ENCODE measurements at regions of chr1 and their contacts with region 1.

Region 1: GRCh38 chr1:84603941-84604830 is 29.9 kb upstream of the CTBS start:
- DNase-seq: peak in 1 of 2 donors; percentile 53
- ATAC-seq: peak; percentile 86 to 98 (median 91)
- H3K4me3 ChIP-seq: peak overlapping the region; percentile 47
- H3K27ac ChIP-seq: peak overlapping the region; percentile 49
- H3K4me1 ChIP-seq: peaks cover 10% of the 10 kb centered on the region
- H3K27me3 ChIP-seq: no peaks in the 10 kb centered on the region
- CTCF ChIP-seq: peak; percentile 63

Region 2: DNA sequence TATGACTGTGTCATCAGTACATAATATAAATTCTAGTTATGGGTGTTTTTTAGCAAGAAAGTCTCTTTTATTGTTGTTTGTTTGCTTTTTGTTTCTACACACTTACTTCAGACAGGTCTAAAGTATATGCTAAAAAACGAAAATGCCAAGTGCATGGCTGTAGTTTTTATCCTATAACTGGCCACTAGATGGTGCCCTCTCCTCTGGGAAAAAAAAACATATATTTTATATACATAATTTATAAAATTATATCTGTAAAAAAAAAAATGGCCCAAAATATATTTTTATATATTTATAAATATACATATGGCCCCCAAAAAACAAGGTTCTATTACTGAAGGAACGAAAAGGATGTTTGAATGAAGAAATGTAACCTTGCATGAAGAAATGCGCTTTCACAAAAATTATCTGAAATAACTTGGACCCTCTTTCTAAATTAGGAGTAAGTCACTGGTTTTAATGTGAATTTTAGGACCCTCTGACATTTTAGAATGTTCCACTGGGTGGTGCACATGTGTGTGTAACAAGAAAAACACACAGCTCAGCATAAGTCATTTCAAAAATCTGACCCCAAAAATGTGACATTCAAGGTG is 698.8 kb before region 1 on chr1:
- intact Hi-C with region 1: loop called in 1 of 2 experiments (anchors 10 kb)
- DNase-seq: no peak
- ATAC-seq: no peak
- H3K4me3 ChIP-seq: no peak overlapping the region
- H3K27ac ChIP-seq: no peak overlapping the region
- H3K4me1 ChIP-seq: no peaks in the 10 kb centered on the region
- H3K27me3 ChIP-seq: no peaks in the 10 kb centered on the region
- CTCF ChIP-seq: peak; percentile 65

Region 3: GRCh38 chr1:83931658-83932253 is 672.4 kb before region 1 on chr1:
- intact Hi-C with region 1: loop called in 1 of 2 experiments (anchors 10 kb)
- DNase-seq: no peak
- ATAC-seq: peak; percentile 64 to 89 (median 72)
- H3K4me3 ChIP-seq: no peak overlapping the region
- H3K27ac ChIP-seq: no peak overlapping the region
- H3K4me1 ChIP-seq: peaks cover 10% of the 10 kb centered on the region
- H3K27me3 ChIP-seq: no peaks in the 10 kb centered on the region
- CTCF ChIP-seq: peak; percentile 76

Region 4: DNA sequence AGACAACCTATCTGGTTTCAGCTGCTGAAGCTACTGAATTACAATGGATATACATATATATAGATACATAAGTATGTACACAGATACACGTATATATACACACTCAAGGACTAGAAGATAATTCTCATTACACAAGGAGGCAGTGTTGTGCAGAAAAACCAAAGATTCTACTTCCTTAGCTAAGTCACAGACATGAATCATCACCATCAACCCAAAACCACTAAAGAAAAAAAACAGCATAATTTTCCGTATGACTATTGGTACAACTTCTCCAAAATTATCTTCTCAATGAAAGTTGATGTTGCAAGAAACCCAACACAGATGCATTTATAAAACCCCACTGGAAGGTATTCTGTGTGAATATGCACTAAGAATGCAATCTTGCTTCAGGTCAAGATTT is 161.9 kb before region 1 on chr1:
- intact Hi-C with region 1: loop called (anchors 5 to 10 kb)
- DNase-seq: no peak
- ATAC-seq: peak in 3 of 4 donors; percentile 55 to 71 (median 61)
- H3K4me3 ChIP-seq: no peak overlapping the region
- H3K27ac ChIP-seq: no peak overlapping the region
- H3K4me1 ChIP-seq: no peaks in the 10 kb centered on the region
- H3K27me3 ChIP-seq: no peaks in the 10 kb centered on the region
- CTCF ChIP-seq: peak; percentile 46

Region 5: GRCh38 chr1:84772428-84772943 is 168.3 kb after region 1 on chr1:
- intact Hi-C with region 1: no loop called
- DNase-seq: peak; percentile 66 to 70
- ATAC-seq: peak; percentile 68 to 88 (median 76)
- H3K4me3 ChIP-seq: no peak overlapping the region
- H3K27ac ChIP-seq: no peak overlapping the region
- H3K4me1 ChIP-seq: no peaks in the 10 kb centered on the region
- H3K27me3 ChIP-seq: no peaks in the 10 kb centered on the region
- CTCF ChIP-seq: peak; percentile 92